Heart right ventricle (tissue), 16 donors: ENCODE measurements at regions of chr11 and their contacts with region 1.

Region 1: GRCh38 chr11:114762408-114762807 is 84.1 kb downstream of the NXPE2 start:
- DNase-seq: peak; percentile 61 to 64
- ATAC-seq: peak; percentile 73 to 91 (median 82)
- H3K4me3 ChIP-seq: no peak overlapping the region
- H3K27ac ChIP-seq: no peak overlapping the region
- H3K4me1 ChIP-seq: no peaks in the 10 kb centered on the region
- H3K27me3 ChIP-seq: peaks cover 0 to 5% (median 0%) of the 10 kb centered on the region in 7 donors
- CTCF ChIP-seq: peak; percentile 33 to 79 (median 76)

Region 2: GRCh38 chr11:113994077-113994954 is 768.1 kb before region 1 on chr11:
- intact Hi-C with region 1: loop called in 2 of 10 experiments (anchors 10 kb)
- DNase-seq: peak in 1 of 2 donors; percentile 18
- ATAC-seq: peak in 3 of 8 donors; percentile 31 to 51 (median 43)
- H3K4me3 ChIP-seq: no peak overlapping the region
- H3K27ac ChIP-seq: no peak overlapping the region
- H3K4me1 ChIP-seq: no peaks in the 10 kb centered on the region
- H3K27me3 ChIP-seq: peaks cover 0 to 49% (median 21%) of the 10 kb centered on the region in 7 donors
- CTCF ChIP-seq: peak; percentile 51 to 78 (median 73)

Region 3: DNA sequence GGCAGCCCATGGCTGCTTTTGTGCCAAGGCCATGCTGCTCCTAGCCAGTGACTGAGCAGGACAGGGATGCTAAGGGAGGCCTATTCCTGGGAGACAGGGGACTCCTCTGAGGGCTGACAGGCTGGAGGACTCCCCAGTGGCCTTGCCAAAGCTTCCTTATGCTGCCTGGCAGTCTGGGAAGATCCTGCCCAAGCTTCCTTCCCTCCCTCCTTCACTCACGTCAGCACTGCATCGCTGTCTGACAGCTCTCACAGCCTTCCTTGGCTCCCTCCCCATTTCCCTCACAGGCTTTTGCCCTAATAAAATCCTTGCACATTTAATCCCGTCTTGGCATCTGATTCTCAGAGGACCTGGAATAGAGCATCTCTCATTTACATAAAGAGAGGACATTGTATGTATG is 761.0 kb before region 1 on chr11:
- intact Hi-C with region 1: loop called in 3 of 10 experiments (anchors 10 kb)
- DNase-seq: no peak
- ATAC-seq: no peak
- H3K4me3 ChIP-seq: no peak overlapping the region
- H3K27ac ChIP-seq: no peak overlapping the region
- H3K4me1 ChIP-seq: no peaks in the 10 kb centered on the region
- H3K27me3 ChIP-seq: peaks cover 0 to 33% (median 13%) of the 10 kb centered on the region in 7 donors
- CTCF ChIP-seq: no peak

Region 4: DNA sequence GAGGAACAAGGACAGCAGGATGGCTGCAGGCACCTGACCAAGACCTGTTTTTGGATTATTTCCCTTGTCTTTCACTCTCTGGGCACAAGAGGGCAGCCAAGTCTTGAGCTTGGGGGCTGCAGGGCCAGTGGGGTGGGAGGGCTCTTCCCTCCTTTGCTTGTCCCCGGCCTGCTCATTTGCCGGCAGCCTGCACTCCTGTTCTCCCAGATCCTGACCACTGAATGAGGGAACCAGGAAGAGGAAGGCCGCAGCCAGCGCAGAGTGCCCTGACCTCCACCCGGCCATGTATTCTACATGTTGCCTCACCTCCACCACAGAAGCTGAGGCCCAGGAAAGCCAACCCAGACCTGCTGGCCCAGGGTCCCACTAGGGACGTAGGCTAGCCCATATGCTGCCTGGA is 481.7 kb before region 1 on chr11:
- intact Hi-C with region 1: loop called in 6 of 10 experiments (anchors 5 to 10 kb)
- DNase-seq: peak; percentile 41 to 68
- ATAC-seq: peak; percentile 74 to 92 (median 86)
- H3K4me3 ChIP-seq: no peak overlapping the region
- H3K27ac ChIP-seq: peak overlapping the region in 7 of 10 donors; percentile 18 to 79 (median 58)
- H3K4me1 ChIP-seq: peaks cover 4 to 30% (median 21%) of the 10 kb centered on the region in 9 donors
- H3K27me3 ChIP-seq: no peaks in the 10 kb centered on the region
- CTCF ChIP-seq: peak; percentile 48 to 83 (median 71)

Region 5: DNA sequence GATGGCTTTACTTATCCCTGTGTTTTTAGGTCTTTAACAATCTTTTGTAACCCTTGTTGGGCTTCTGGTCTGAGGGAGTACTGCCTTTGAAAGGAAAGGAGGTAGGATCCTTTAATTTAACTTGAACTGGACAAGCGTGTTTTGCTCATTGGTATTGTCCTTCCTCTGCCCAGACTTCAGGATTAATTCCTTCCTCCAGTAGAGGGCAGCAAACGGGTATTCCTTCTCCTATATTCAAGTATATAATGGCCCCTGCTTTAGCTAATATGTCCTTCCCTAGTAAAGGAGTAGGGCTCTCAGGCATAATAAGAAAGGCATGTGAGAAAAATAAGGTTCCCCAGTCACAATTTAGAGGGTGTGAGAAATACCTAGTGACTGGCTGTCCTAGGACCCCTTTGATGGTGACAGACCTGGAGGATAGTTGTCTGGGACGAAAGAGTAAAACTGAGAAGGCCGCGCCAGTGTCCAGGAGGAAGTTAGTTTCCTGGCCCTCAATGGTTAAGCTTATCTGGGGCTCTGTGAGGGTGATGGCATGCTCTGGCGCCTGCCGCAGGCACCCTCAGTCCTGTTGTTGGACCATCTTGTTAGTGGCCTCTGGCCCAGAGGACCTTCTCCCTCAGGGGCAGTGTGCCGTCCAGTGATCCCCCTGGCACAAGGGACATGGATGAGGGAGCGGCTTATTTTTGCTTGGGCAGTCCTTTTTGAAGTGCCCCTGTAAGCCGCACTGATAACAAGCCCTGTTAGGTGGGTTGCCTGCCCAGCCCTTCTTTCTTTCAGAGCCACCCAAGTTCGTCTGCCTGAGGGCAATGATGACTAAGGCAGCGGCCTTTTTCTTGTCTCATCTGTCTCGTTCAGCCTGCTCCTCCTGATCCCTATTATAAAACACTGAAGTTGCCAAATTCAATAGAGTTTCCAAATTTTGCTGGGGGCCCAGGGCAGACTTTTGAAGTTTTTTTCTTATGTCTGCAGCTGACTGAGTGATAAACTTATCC is 413.9 kb before region 1 on chr11:
- intact Hi-C with region 1: loop called in 8 of 10 experiments (anchors 2 to 10 kb)
- DNase-seq: peak in 1 of 2 donors; percentile 64
- ATAC-seq: peak in 6 of 8 donors; percentile 64 to 78 (median 73)
- H3K4me3 ChIP-seq: no peak overlapping the region
- H3K27ac ChIP-seq: no peak overlapping the region
- H3K4me1 ChIP-seq: peaks cover 0 to 8% (median 0%) of the 10 kb centered on the region in 9 donors
- H3K27me3 ChIP-seq: no peaks in the 10 kb centered on the region
- CTCF ChIP-seq: peak; percentile 35 to 72 (median 63)

Region 6: GRCh38 chr11:115008799-115009198 is 246.4 kb after region 1 on chr11:
- intact Hi-C with region 1: no loop called
- DNase-seq: no peak
- ATAC-seq: no peak
- H3K4me3 ChIP-seq: no peak overlapping the region
- H3K27ac ChIP-seq: no peak overlapping the region
- H3K4me1 ChIP-seq: no peaks in the 10 kb centered on the region
- H3K27me3 ChIP-seq: no peaks in the 10 kb centered on the region
- CTCF ChIP-seq: no peak

Region 7: DNA sequence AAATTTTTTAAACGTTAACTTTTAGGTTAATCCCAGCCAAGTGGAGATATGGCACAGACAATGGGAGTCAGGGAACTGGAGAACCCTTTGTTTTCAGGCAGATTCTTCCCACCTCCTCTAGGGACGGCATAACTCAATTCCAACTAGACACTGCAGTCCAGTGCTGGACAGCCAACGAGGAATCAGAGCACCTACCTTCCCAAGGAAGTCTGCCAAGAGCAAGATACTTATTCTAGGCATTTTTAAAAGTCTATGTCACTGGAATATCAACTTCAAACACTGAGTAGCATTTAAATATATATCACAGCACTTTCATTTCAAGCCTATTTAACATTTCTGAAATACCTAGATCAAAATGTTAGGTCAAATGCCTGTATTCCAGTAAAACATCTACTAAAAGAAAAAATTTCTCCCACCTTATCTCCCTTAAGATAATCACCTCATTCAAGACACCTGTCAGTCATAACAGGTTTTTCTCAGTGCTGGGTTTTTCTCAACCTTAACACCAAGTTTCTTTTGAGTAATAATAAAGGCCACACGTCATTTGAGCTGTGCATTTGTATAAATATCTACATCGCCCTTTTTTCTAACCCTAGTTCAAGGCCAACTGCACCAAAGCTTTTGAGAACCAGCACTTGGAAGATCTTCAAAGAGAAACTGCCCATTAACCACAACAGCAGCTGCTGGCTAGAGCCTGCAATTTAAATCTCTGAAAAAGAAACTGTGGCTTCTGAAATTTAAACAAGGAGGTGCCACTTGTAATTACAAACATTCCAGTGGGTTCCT is 734.7 kb after region 1 on chr11:
- intact Hi-C with region 1: loop called in 1 of 10 experiments (anchors 10 kb)
- DNase-seq: no peak
- ATAC-seq: no peak
- H3K4me3 ChIP-seq: no peak overlapping the region
- H3K27ac ChIP-seq: no peak overlapping the region
- H3K4me1 ChIP-seq: peaks cover 0 to 14% (median 8%) of the 10 kb centered on the region in 9 donors
- H3K27me3 ChIP-seq: peaks cover 0 to 41% (median 12%) of the 10 kb centered on the region in 7 donors
- CTCF ChIP-seq: no peak